Activated naive CD4-positive, alpha-beta T cell treated with anti-CD3 and anti-CD28 coated beads for 36 hours (primary cell): ENCODE measurements at regions of chr2 and their contacts with region 1.

Region 1: DNA sequence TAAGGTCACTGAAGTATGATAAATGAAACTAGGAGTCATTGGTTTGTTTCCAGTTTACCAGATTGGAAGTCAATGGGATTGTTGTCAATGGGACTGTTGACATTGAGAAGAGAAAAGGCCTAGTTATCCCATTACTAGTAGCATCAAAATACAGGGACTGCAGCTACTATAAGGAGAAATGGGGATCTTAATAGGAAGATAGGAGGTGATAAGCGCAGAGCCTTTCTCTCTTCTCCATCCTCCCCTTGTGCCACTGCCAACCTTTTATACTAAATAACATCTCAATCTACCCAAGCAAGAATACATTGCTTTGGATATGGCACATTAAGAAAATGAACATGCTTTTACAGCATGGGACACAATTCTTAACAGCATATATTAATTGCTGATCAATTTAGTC is 10.5 kb upstream of the BBS5 start:
- DNase-seq: no peak
- H3K4me3 Mint-ChIP-seq: no peak overlapping the region
- H3K27ac Mint-ChIP-seq: no peak overlapping the region
- H3K4me1 Mint-ChIP-seq: no peaks in the 10 kb centered on the region
- H3K27me3 Mint-ChIP-seq: no peaks in the 10 kb centered on the region

Region 2: GRCh38 chr2:169562519-169562918 is 93.7 kb after region 1 on chr2:
- CTCF ChIA-PET with region 1: no interaction called
- intact Hi-C with region 1: loop called (anchors 2 kb)
- DNase-seq: no peak
- H3K4me3 Mint-ChIP-seq: no peak overlapping the region
- H3K27ac Mint-ChIP-seq: no peak overlapping the region
- H3K4me1 Mint-ChIP-seq: no peaks in the 10 kb centered on the region
- H3K27me3 Mint-ChIP-seq: no peaks in the 10 kb centered on the region